ENCODE measurements at regions of chr2 and their contacts with region 1.

Region 1: GRCh38 chr2:42169874-42170521 is 845 bp downstream of the EML4 start:
- DNase-seq: no peak

Region 2: GRCh38 chr2:42141687-42142546 is 28.1 kb before region 1 on chr2:
- CTCF ChIA-PET with region 1: no interaction called
- POLR2A ChIA-PET with region 1: interaction called, 11 read pairs
- DNase-seq: peak; percentile 65